ENCODE measurements at regions of chr20 and their contacts with region 1.

Region 1: DNA sequence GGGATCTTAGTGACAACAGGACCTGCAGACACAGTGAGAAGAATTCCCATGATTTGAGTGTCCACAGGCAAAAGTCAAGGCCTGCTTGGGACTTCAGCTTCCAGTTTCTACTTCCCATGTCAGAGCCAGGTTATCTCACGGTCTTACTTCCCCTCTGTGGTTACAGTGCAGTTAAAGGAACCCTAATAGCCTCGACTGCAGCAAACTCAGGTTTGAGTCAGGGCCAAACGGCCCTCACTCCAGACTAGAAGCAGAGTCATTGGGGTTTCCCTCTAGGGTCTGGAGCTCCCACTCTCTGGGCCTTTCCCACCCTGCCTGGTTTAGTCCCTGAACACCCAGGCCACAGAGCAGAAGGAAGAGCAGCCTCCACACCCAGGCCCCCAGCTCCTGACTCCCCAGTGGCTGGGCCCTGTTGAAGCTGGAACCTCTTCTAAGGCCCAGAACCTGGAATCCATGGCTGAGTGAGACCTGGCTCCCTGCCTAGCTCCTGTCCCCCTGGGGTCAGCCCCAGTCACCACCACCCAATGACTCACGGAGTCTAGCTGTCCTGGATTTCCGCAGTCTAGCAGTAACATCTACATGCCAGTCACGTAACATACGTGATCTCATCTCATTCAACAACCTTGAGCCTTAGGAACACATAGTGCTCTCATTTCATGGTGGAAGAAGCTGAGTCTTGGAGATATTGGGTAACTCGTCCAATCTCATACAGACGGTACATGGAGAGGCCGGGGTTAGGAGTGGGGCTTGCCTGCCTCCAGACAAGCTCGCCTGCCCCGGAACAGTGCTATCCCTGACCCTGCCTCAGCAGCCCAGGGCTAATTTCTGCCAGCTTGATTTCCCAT is 9.2 kb upstream of the GHRH start:
- DNase-seq: no peak
- ATAC-seq: no peak
- H3K4me3 Mint-ChIP-seq: no peak overlapping the region
- H3K27ac Mint-ChIP-seq: no peak overlapping the region
- H3K4me1 Mint-ChIP-seq: peaks cover 7% of the 10 kb centered on the region
- H3K27me3 Mint-ChIP-seq: no peaks in the 10 kb centered on the region

Region 2: DNA sequence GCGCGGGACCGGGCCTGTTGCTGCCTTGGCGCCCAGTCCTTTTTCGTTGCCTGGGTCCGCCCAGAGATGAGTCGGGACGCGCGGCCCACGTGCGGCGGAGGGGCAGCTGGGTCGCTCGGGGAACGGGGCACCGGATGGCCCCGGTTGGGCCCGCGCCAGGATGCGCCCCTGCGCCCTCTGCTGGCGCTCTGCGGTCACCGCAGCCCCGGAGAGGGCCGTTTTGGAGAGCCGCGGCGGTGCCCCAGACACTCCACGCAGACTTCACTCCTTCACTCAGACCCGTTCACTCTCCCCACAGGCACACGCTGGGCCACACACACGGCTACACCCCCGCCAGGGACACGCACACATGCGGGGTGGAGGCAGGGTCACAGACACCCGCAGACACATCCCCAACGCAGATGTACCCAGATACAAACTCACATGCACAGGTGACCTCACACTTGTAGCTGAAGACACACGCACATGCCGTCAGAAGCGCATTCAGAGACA is 113.9 kb after region 1 on chr20:
- CTCF ChIA-PET with region 1: interaction called, 35 read pairs
- POLR2A ChIA-PET with region 1: no interaction called
- DNase-seq: peak; percentile 84
- ATAC-seq: peak; percentile 94
- H3K4me3 Mint-ChIP-seq: peak overlapping the region; percentile 74
- H3K27ac Mint-ChIP-seq: peak overlapping the region; percentile 75
- H3K4me1 Mint-ChIP-seq: peaks cover 4% of the 10 kb centered on the region
- H3K27me3 Mint-ChIP-seq: peaks cover 5% of the 10 kb centered on the region

Region 3: DNA sequence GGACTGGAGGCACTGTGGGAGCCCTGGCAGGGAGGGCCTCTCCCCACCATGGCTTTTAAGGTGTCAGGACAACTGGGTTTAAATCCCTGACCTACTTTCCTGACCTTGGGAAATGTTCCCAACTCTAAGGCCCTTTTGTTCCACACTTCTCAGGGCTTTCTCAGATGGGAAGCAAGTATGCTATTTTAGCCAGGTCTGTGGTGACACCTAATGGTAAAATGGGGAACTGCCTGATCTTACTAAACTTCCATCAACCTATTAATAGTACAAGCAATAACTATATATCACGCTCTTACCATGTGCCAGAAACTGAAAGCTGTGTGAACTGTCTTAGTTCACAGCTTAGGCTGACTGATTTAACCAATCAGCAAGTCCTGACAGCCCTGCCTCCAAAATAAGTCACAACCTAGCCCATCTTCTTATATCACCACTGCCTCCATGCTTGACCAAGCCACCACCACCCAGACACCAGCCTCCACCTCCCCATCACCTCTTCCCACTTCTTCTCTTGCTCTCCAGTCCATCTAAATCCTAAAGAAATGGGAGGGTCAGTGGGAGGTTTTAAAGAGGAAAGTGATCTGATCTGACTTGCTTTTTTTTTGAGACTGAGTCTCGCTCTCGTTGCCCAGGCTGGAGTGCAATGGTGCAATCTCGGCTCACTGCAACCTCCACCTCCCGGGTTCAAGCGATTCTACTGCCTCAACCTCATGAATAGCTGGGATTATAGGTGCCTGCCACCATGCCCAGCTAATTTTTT is 263.8 kb after region 1 on chr20:
- CTCF ChIA-PET with region 1: interaction called, 29 read pairs
- POLR2A ChIA-PET with region 1: interaction called, 4 read pairs
- DNase-seq: peak; percentile 69
- ATAC-seq: peak; percentile 85
- H3K4me3 Mint-ChIP-seq: no peak overlapping the region
- H3K27ac Mint-ChIP-seq: no peak overlapping the region
- H3K4me1 Mint-ChIP-seq: peaks cover 15% of the 10 kb centered on the region
- H3K27me3 Mint-ChIP-seq: peaks cover 14% of the 10 kb centered on the region

Measured in activated CD8-positive, alpha-beta T cell treated with anti-CD3 and anti-CD28 coated beads, Interleukin-2, amount 10 ng/mL, durations not matched to agents 7 days and 5 days (primary cell).